ENCODE measurements at regions of chr17 and their contacts with region 1.

Region 1: GRCh38 chr17:63946440-63947367 is 14.6 kb upstream of the CD79B start:
- DNase-seq: peak; percentile 29 to 81 (median 40)
- ATAC-seq: peak; percentile 80
- H3K4me3 ChIP-seq: peak overlapping the region; percentile 39
- H3K4me3 Mint-ChIP-seq: peak overlapping the region; percentile 58
- H3K27ac ChIP-seq: no peak overlapping the region
- H3K27ac Mint-ChIP-seq: no peak overlapping the region
- H3K4me1 ChIP-seq: peaks cover 25% of the 10 kb centered on the region
- H3K4me1 Mint-ChIP-seq: peaks cover 29% of the 10 kb centered on the region
- H3K27me3 ChIP-seq: no peaks in the 10 kb centered on the region
- H3K27me3 Mint-ChIP-seq: no peaks in the 10 kb centered on the region
- CTCF ChIP-seq: peak; percentile 87

Region 2: GRCh38 chr17:63697341-63698286 is 249.1 kb before region 1 on chr17:
- CTCF ChIA-PET with region 1: no interaction called
- POLR2A ChIA-PET with region 1: no interaction called
- intact Hi-C with region 1: no loop called
- DNase-seq: peak; percentile 77 to 92 (median 84)
- ATAC-seq: peak; percentile 33
- H3K4me3 ChIP-seq: peak overlapping the region; percentile 98
- H3K4me3 Mint-ChIP-seq: peak overlapping the region; percentile 100
- H3K27ac ChIP-seq: peak overlapping the region; percentile 73 to 91
- H3K27ac Mint-ChIP-seq: peak overlapping the region; percentile 100
- H3K4me1 ChIP-seq: peaks cover 78% of the 10 kb centered on the region
- H3K4me1 Mint-ChIP-seq: peaks cover 74% of the 10 kb centered on the region
- H3K27me3 ChIP-seq: no peaks in the 10 kb centered on the region
- H3K27me3 Mint-ChIP-seq: peaks cover 5% of the 10 kb centered on the region
- CTCF ChIP-seq: peak; percentile 82

Region 3: DNA sequence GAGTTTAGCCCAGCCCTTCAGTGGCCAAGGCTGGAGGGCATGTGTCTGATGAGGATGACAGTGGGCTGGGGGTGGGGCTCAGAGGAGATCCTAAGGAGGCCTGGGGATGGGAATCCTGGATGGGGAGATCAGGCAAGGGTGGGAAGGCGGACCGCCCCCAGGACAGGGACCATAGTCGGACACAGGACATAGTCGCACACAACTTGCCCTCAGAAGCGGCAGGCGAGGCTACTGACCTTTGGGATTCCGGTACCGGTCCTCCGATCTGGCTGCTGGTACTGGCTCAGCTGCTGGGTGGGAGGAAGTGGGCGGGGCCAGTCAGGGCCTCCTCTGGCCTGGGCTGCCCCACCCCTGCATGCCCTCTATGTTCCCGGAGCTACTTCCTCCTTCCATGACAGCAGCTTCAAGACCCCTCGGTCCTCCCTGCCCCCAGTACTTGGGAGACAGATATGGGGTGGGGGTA is 15.6 kb before region 1 on chr17:
- CTCF ChIA-PET with region 1: interaction called, 8 read pairs
- POLR2A ChIA-PET with region 1: interaction called, 12 read pairs
- intact Hi-C with region 1: no loop called
- DNase-seq: peak; percentile 24 to 85 (median 60)
- ATAC-seq: peak; percentile 78
- H3K4me3 ChIP-seq: peak overlapping the region; percentile 69
- H3K4me3 Mint-ChIP-seq: peak overlapping the region; percentile 92
- H3K27ac ChIP-seq: peak overlapping the region; percentile 60 to 63
- H3K27ac Mint-ChIP-seq: peak overlapping the region; percentile 92
- H3K4me1 ChIP-seq: peaks cover 33% of the 10 kb centered on the region
- H3K4me1 Mint-ChIP-seq: peaks cover 26% of the 10 kb centered on the region
- H3K27me3 ChIP-seq: no peaks in the 10 kb centered on the region
- H3K27me3 Mint-ChIP-seq: no peaks in the 10 kb centered on the region
- CTCF ChIP-seq: no peak

Region 4: GRCh38 chr17:63998050-63998720 is 51.5 kb after region 1 on chr17 and contains the start of gene PRR29:
- CTCF ChIA-PET with region 1: interaction called, 13 read pairs
- POLR2A ChIA-PET with region 1: interaction called, 3 read pairs
- intact Hi-C with region 1: loop called in 1 of 2 experiments (anchors 5 kb)
- DNase-seq: peak; percentile 56 to 90 (median 70)
- ATAC-seq: peak; percentile 70
- H3K4me3 ChIP-seq: peak within 1 kb of the TSS; percentile 80
- H3K4me3 Mint-ChIP-seq: peak within 1 kb of the TSS; percentile 91
- H3K27ac ChIP-seq: no peak within 1 kb of the TSS
- H3K27ac Mint-ChIP-seq: peak within 1 kb of the TSS; percentile 73
- H3K4me1 ChIP-seq: peaks cover 45% of the 10 kb centered on the region
- H3K4me1 Mint-ChIP-seq: peaks cover 58% of the 10 kb centered on the region
- H3K27me3 ChIP-seq: no peaks in the 10 kb centered on the region
- H3K27me3 Mint-ChIP-seq: no peaks in the 10 kb centered on the region
- CTCF ChIP-seq: no peak
- total RNA-seq, gene PRR29: 0.56 to 0.71 TPM